Activated CD4-positive, alpha-beta T cell treated with anti-CD3 and anti-CD28 coated beads, Interleukin-2, amount 10 ng/mL, durations not matched to agents 24 days and 14 days (primary cell): ENCODE measurements at regions of chr15 and their contacts with region 1.

Region 1: GRCh38 chr15:51737280-51738017 is at the start of gene LYSMD2:
- DNase-seq: peak; percentile 91
- H3K4me3 Mint-ChIP-seq: peak within 1 kb of the TSS; percentile 87
- H3K27ac Mint-ChIP-seq: peak within 1 kb of the TSS; percentile 92
- H3K4me1 Mint-ChIP-seq: peaks cover 52% of the 10 kb centered on the region
- H3K27me3 Mint-ChIP-seq: peaks cover 2% of the 10 kb centered on the region
- total RNA-seq, gene LYSMD2: 15.4 and 15.5 TPM in 2 replicates

Region 2: GRCh38 chr15:51561271-51561670 is 176.2 kb before region 1 on chr15:
- intact Hi-C with region 1: no loop called
- DNase-seq: no peak
- H3K4me3 Mint-ChIP-seq: no peak overlapping the region
- H3K27ac Mint-ChIP-seq: no peak overlapping the region
- H3K4me1 Mint-ChIP-seq: no peaks in the 10 kb centered on the region
- H3K27me3 Mint-ChIP-seq: peaks cover 2% of the 10 kb centered on the region

Region 3: GRCh38 chr15:51750792-51751685 is 13.6 kb after region 1 on chr15 and contains the start of gene TMOD2:
- intact Hi-C with region 1: loop called (anchors 2 kb)
- DNase-seq: peak; percentile 84
- H3K4me3 Mint-ChIP-seq: peak within 1 kb of the TSS; percentile 83
- H3K27ac Mint-ChIP-seq: no peak within 1 kb of the TSS
- H3K4me1 Mint-ChIP-seq: peaks cover 16% of the 10 kb centered on the region
- H3K27me3 Mint-ChIP-seq: peaks cover 49% of the 10 kb centered on the region
- total RNA-seq, gene TMOD2: 4.0 and 4.6 TPM in 2 replicates

Region 4: DNA sequence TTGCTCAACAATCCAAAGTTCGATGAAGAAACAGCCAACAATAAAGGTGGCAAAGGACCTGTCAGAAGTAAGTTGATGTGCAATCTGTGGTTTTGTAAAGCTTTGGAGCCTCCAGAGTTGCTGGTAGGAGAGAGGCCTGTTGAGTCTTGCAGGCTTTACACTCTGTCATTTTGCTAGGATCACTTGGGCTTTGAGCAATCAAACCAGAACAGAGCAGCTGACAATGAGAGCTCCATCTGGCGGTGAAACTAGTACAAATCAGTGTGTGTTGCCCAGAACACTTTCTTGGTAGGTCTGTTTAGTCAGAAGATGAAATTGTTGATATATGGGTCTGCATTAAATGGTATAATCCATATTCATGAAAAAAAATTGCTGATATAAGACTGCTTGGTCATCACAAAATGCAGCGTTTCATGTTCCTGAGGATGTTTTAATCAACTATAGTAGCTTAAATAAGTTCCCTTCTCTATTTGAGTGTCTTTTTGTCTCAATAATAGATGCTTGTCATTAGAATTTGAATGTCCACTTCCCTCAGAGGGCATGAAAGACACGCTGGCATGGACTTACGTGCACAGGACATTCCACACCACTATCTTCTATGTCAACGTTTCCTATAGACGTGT is 39.6 kb after region 1 on chr15:
- intact Hi-C with region 1: loop called (anchors 5 kb)
- DNase-seq: peak; percentile 90
- H3K4me3 Mint-ChIP-seq: no peak overlapping the region
- H3K27ac Mint-ChIP-seq: no peak overlapping the region
- H3K4me1 Mint-ChIP-seq: peaks cover 4% of the 10 kb centered on the region
- H3K27me3 Mint-ChIP-seq: no peaks in the 10 kb centered on the region

Region 5: GRCh38 chr15:51829360-51830275 is 92.2 kb after region 1 on chr15 and contains the start of gene TMOD3:
- intact Hi-C with region 1: loop called (anchors 5 kb)
- DNase-seq: peak; percentile 97
- H3K4me3 Mint-ChIP-seq: peak within 1 kb of the TSS; percentile 98
- H3K27ac Mint-ChIP-seq: peak within 1 kb of the TSS; percentile 96
- H3K4me1 Mint-ChIP-seq: peaks cover 36% of the 10 kb centered on the region
- H3K27me3 Mint-ChIP-seq: peaks cover 22% of the 10 kb centered on the region
- total RNA-seq, gene TMOD3: 60.8 and 66.6 TPM in 2 replicates

Region 6: GRCh38 chr15:52005748-52006701 is 268.6 kb after region 1 on chr15:
- intact Hi-C with region 1: loop called (anchors 2 kb)
- DNase-seq: peak; percentile 73
- H3K4me3 Mint-ChIP-seq: peak overlapping the region; percentile 51
- H3K27ac Mint-ChIP-seq: peak overlapping the region; percentile 82
- H3K4me1 Mint-ChIP-seq: peaks cover 57% of the 10 kb centered on the region
- H3K27me3 Mint-ChIP-seq: no peaks in the 10 kb centered on the region

Region 7: GRCh38 chr15:52163321-52164190 is 426.1 kb after region 1 on chr15:
- intact Hi-C with region 1: no loop called
- DNase-seq: no peak
- H3K4me3 Mint-ChIP-seq: no peak overlapping the region
- H3K27ac Mint-ChIP-seq: no peak overlapping the region
- H3K4me1 Mint-ChIP-seq: peaks cover 20% of the 10 kb centered on the region
- H3K27me3 Mint-ChIP-seq: no peaks in the 10 kb centered on the region

Region 8: DNA sequence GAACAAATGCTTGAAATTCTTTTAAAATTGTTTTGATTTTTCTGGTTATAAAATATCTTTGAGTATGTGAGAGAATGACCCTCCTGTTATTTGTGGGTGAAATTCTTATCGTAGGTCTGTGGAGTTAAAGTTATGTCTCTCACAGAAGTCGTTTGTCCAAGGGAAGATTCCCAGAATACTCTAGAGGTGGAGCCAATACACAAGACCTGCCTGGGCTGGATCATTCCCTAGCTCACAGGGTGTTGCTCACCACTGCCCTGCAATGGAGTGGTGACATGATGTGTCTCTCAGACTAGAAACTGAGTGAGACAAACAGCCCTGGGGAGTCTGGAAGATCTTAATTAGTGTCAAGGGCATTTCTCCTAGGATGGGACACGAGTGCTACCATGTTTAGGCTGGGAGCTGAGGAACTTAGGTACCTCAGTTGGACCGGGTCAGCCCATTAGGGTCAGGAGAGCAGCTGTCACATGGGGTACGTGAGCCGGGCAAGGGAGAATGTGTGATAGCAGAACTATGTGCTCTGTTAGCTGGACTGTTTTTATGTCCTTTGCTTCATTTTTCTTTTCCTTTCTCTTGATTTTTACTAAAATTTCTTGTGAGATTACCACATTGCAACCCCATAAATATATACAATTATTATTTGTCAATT is 611.7 kb after region 1 on chr15:
- intact Hi-C with region 1: no loop called
- DNase-seq: no peak
- H3K4me3 Mint-ChIP-seq: no peak overlapping the region
- H3K27ac Mint-ChIP-seq: no peak overlapping the region
- H3K4me1 Mint-ChIP-seq: peaks cover 6% of the 10 kb centered on the region
- H3K27me3 Mint-ChIP-seq: no peaks in the 10 kb centered on the region